Activated B cell treated with CpG ODN at 0.5 μM for 24 hours (primary cell): ENCODE measurements at regions of chr16 and their contacts with region 1.

Region 1: DNA sequence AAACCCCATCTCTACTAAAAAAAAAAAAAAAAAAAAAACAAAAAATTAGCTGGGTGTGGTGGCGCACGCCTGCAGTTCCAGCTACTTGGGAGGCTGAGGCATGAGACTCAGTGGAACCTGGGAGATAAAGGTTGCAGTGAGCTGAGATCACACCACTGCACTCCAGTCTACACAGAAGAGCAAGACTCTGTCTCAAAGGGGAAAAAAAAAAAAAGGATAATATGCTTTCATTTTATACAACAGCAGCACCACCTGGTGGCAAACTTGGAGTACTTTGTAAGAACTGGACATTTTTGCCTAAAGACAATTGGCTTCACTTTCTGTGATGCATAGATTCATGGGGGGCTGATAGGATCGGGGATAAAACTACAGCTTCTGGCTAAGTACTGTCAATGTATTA is 8.5 kb downstream of the CHTF8 start:
- DNase-seq: no peak
- ATAC-seq: peak; percentile 69
- H3K4me3 Mint-ChIP-seq: no peak overlapping the region
- H3K27ac Mint-ChIP-seq: no peak overlapping the region
- H3K4me1 Mint-ChIP-seq: peaks cover 13% of the 10 kb centered on the region
- H3K27me3 Mint-ChIP-seq: no peaks in the 10 kb centered on the region
- CTCF ChIP-seq: peak; percentile 26

Region 2: DNA sequence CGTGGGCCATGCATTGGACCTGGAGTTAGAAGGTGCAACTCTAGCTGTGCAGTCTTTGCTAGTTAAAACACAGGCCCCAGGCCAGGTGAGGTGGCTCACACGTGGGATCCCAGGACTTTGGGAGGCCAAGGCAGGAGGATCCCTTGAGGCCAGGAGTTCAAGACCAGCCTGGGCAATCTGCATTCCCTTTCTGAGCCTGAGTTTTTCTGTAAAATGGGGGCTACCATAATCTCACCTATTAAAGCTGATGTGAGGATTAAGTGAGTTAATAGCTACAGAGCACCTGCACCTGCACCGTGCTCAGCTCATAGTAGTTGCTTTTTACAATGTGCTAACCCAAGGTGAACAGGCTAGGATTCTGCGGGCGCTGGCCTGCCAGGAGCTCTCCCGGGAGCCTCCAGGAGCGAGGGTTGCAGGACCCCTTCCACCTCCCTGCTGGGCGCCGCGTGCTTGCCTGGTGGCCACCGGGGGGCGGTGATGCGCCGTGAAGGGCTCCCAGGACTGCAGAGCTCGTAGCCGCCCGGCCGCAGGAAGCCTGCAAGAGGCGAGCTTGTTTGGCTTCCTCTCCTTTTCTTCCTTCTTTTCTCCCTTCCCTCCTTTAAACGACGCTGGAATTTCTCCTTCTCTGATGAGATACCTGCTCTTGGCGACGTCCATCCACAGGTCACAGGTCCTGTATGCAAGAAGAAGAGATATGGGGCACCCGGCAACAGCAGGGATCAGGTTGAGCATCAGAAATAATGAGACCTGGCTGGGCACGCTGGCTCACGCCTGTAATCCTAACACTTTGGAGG is 533.5 kb before region 1 on chr16:
- CTCF ChIA-PET with region 1: interaction called, 16 read pairs
- POLR2A ChIA-PET with region 1: no interaction called
- intact Hi-C with region 1: loop called (anchors 2 kb)
- DNase-seq: peak; percentile 37
- ATAC-seq: peak; percentile 58
- H3K4me3 Mint-ChIP-seq: no peak overlapping the region
- H3K27ac Mint-ChIP-seq: no peak overlapping the region
- H3K4me1 Mint-ChIP-seq: no peaks in the 10 kb centered on the region
- H3K27me3 Mint-ChIP-seq: no peaks in the 10 kb centered on the region
- CTCF ChIP-seq: no peak

Region 3: DNA sequence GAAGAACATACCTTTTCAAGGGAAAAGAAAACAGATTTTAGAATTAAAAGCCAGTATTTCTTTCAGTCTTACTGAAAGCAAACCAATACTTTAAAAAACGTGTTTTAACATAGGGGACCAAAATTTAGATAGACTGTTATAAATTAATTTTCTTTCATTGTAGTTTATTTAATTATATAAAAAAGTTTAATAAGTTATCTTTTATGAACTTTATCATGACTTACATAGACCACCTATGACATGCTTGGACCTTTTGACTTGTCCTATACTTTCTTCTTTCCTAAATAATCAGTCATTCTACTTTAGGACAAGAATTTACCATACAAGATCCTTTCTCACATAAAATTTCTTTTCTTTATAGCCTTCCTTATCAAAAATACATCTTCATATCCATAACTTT is 120.4 kb before region 1 on chr16:
- CTCF ChIA-PET with region 1: no interaction called
- POLR2A ChIA-PET with region 1: no interaction called
- intact Hi-C with region 1: no loop called
- DNase-seq: no peak
- ATAC-seq: no peak
- H3K4me3 Mint-ChIP-seq: no peak overlapping the region
- H3K27ac Mint-ChIP-seq: no peak overlapping the region
- H3K4me1 Mint-ChIP-seq: peaks cover 16% of the 10 kb centered on the region
- H3K27me3 Mint-ChIP-seq: no peaks in the 10 kb centered on the region
- CTCF ChIP-seq: no peak

Region 4: DNA sequence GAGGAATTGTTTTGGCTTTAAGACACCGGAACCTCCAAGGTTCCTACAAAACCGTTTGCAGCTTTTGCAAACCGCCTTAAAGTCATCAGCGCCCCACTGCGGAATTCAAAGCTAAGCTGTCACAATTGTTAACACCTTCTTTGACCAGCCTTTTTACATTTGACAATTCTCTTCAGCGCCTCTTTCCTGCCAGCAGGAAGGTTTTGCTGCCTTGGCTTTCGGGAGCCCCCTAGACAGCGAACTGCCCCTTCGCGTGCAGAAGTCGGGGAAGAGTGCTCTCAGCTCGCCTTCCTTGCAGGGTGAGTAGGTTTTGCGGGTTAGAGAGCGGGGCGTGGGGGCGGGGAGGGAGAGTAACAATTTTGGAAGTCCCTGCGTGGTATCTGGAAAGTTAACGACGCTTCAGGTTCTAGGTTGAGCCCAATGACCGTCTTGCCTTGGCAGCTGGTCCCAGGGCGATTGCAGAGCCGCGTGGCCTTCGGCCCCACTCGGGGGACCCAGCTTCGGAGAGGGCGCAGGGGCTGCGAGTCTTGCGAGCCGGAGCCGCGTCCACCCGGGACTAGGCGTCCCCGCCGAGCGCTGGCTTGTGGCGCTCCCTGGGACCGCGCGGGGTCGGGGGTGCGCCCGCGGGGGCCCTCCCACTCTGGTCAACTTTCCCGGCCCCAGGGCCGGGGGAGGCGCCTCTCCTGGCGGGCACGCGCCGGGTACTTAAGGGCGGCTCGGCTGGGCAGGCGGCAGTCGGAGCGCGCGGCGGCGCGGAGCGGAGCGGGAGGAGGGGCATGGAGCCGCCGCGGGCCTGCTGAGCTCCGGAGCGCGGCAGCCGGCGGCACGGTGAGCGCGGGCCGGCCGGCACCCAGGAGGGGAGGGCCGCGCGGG is 18.2 kb before region 1 on chr16 and contains the start of gene HAS3:
- CTCF ChIA-PET with region 1: interaction called, 3 read pairs
- POLR2A ChIA-PET with region 1: no interaction called
- intact Hi-C with region 1: loop called (anchors 2 kb)
- DNase-seq: peak; percentile 38
- ATAC-seq: peak; percentile 71
- H3K4me3 Mint-ChIP-seq: peak within 1 kb of the TSS; percentile 86
- H3K27ac Mint-ChIP-seq: peak within 1 kb of the TSS; percentile 66
- H3K4me1 Mint-ChIP-seq: peaks cover 18% of the 10 kb centered on the region
- H3K27me3 Mint-ChIP-seq: peaks cover 34% of the 10 kb centered on the region
- CTCF ChIP-seq: no peak
- total RNA-seq, gene HAS3: 0.71 and 0.82 TPM in 2 replicates